GM10248 (cell line): ENCODE measurements at regions of chr16 and their contacts with region 1.

Region 1: DNA sequence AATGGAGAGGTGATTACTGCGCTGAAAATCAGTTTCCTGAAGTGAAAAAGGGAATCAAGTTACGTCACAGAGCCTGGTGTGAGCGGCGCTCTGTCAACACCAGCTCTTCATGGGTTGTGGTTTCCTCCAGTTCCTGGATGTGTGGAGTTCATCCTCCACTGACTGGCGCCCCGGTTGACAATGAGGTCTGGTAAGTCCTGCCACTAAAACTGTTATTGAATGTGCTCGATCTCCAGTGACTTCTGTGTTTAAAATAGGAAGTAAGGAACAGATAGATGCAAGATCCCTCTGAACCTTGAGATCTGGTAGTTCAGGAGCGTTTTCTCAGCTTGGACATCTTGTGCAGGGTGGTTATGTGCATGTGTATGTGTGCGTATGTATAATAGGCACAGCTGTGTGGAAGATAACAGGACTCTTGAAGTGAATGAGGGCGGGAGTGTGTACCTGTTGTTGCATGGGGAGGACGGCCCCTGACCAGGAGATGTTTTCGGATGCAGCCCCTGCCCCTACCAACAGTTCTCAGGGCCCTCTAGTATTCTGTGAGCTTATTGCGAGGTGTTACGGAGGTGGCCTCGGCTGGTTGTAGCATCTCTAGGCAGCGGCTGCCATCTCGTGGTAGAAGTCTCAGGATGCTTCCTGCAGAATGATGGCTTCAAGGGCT is 22.0 kb upstream of the GOT2 start:
- DNase-seq: peak; percentile 75
- CTCF ChIP-seq: peak; percentile 90

Region 2: GRCh38 chr16:58377932-58378331 is 378.2 kb before region 1 on chr16:
- CTCF ChIA-PET with region 1: no interaction called
- POLR2A ChIA-PET with region 1: no interaction called
- DNase-seq: no peak
- CTCF ChIP-seq: no peak

Region 3: GRCh38 chr16:58487566-58488351 is 268.4 kb before region 1 on chr16:
- CTCF ChIA-PET with region 1: interaction called, 14 read pairs
- POLR2A ChIA-PET with region 1: no interaction called
- DNase-seq: peak; percentile 90
- CTCF ChIP-seq: peak; percentile 94

Region 4: GRCh38 chr16:58678716-58679115 is 77.4 kb before region 1 on chr16:
- CTCF ChIA-PET with region 1: interaction called, 10 read pairs
- POLR2A ChIA-PET with region 1: no interaction called
- DNase-seq: no peak
- CTCF ChIP-seq: no peak

Region 5: DNA sequence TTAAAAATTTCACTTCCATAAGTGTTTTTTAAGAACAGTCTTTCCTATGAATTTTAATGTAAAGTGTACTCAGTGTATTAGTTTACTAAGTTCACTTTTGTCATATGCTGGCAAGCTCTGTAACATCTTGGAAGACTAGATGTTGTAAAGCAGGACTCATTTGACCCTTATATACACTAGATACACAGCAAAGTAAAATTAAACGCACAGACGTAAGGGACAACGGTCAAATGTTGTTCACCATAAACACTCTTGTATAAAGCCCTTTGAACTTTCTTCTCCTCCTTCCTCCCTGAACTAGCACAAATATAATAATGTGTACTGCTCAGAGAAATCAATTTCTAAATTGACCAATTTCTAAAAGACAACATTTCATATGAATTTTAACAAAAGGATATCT is 15.0 kb before region 1 on chr16:
- CTCF ChIA-PET with region 1: interaction called, 14 read pairs
- POLR2A ChIA-PET with region 1: no interaction called
- DNase-seq: no peak
- CTCF ChIP-seq: no peak

Region 6: DNA sequence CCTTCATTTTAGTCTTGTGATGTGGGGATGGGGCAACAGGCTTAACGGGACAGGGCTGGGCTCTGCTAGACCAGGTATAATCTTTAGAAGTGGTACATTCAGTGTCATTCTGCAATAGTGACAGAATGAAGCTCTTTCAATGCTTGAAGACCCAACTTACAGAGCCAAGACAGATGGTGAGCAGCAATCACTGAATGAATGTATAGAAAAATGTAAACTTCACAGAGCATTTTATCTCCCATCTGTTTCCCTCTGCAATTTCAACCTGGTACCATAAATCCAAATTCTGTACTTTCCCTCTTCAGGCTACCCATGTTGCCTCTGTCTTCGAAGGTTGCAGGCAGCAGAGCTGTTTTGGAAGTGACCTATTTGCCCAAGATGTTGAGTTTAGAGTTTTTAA is 11.5 kb after region 1 on chr16:
- CTCF ChIA-PET with region 1: interaction called, 11 read pairs
- POLR2A ChIA-PET with region 1: no interaction called
- DNase-seq: no peak
- CTCF ChIP-seq: no peak